Activated CD4-positive, alpha-beta T cell treated with anti-CD3 and anti-CD28 coated beads for 36 hours (primary cell): ENCODE measurements at regions of chr4 and their contacts with region 1.

Region 1: DNA sequence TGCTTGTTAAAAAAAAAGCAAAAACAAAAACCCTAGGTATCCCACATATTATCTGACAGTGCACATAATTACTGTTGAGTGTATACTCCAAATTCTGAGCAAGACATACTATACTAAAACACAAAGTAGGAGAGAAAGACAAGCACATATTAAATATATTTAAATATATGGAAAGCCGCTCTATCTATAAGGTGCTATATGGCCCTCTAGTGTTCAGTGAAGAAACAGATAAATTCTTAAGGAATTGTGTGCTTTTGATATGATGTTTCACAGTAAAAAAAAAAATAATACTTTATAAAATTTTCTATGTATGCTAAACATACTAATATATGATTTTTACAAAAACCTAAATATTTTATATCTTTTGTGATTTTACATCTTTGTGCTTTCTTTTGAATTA is 137.8 kb downstream of the FBXW7 start:
- DNase-seq: no peak
- ATAC-seq: no peak
- H3K4me3 Mint-ChIP-seq: no peak overlapping the region
- H3K27ac Mint-ChIP-seq: no peak overlapping the region
- H3K4me1 Mint-ChIP-seq: peaks cover 32% of the 10 kb centered on the region
- H3K27me3 Mint-ChIP-seq: no peaks in the 10 kb centered on the region

Region 2: DNA sequence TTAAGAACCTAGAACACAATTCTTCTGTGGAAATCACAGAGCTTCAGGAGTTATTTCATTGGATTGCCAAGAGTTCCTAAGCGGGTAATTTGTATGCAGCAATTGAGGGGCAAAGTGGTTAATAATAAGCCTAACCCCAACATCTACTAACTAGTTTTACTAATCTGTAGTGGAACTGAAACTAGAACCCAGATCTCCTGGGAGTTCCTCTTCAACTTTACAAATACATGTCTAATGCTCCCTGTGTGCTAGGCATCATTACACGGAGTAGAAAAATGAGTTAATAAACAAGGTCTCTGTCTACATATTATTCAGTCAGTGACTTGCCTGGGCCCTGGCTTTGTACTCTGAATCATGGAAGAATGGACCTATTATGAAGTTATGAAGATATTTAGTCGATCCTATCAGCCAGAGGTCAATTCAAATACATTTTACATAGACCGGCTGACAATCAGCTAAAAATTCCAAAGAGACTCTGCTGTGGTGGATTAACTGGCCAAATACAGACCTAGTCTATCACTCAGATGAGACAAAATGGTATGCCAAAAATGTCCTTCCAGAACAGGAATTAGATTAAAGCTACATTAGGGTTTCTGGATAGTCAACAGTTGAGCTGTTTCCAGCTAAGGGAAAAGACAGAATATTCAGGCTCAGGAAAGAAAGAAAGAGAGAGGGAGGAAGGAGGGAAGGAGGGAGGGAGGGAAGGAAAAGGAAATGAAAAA is 188.1 kb before region 1 on chr4:
- CTCF ChIA-PET with region 1: no interaction called
- POLR2A ChIA-PET with region 1: no interaction called
- intact Hi-C with region 1: no loop called
- DNase-seq: no peak
- ATAC-seq: no peak
- H3K4me3 Mint-ChIP-seq: no peak overlapping the region
- H3K27ac Mint-ChIP-seq: no peak overlapping the region
- H3K4me1 Mint-ChIP-seq: no peaks in the 10 kb centered on the region
- H3K27me3 Mint-ChIP-seq: no peaks in the 10 kb centered on the region

Region 3: GRCh38 chr4:152304220-152304619 is 93.8 kb before region 1 on chr4:
- CTCF ChIA-PET with region 1: no interaction called
- POLR2A ChIA-PET with region 1: no interaction called
- intact Hi-C with region 1: no loop called
- DNase-seq: no peak
- ATAC-seq: no peak
- H3K4me3 Mint-ChIP-seq: no peak overlapping the region
- H3K27ac Mint-ChIP-seq: no peak overlapping the region
- H3K4me1 Mint-ChIP-seq: no peaks in the 10 kb centered on the region
- H3K27me3 Mint-ChIP-seq: no peaks in the 10 kb centered on the region

Region 4: DNA sequence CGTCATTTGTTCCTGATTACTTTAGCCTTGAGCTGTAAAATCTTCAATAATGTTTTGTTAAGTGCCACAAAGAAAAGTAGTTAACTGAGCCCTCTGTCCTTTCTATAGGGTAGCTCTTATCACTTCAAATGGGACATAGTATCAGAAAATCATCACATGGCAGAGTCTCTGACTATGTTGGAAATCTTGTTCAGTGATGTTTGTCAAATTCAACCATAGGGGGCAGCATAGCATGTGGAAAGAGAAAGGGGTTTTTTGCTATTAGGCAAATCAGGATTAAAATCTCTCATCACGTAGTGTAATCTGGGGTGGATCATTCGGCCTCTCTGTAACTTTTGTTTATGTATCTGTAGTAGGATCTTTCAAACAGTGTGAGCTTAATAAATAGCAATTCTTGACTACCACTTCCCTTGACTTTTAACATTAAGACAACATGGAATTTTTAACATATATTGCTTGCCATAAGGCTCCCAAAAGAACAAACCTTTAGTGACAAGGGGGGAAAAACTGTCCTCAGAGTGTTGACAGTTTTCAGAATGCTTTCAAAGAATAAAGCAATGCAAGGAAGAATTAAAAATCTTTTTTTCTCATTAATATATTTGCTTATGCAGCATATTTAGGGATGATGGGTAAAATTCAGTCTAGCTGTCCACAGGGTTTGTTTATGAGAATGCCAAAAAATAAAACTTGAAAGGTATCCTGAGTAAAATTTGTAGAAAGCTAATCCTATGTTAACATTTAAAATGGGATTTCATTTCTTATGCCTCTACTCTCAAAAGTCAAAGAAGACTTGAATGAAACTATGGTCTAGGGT is 10.7 kb after region 1 on chr4:
- CTCF ChIA-PET with region 1: interaction called, 10 read pairs
- POLR2A ChIA-PET with region 1: no interaction called
- intact Hi-C with region 1: no loop called
- DNase-seq: peak; percentile 18
- ATAC-seq: peak; percentile 65
- H3K4me3 Mint-ChIP-seq: no peak overlapping the region
- H3K27ac Mint-ChIP-seq: no peak overlapping the region
- H3K4me1 Mint-ChIP-seq: peaks cover 13% of the 10 kb centered on the region
- H3K27me3 Mint-ChIP-seq: no peaks in the 10 kb centered on the region